AG04450 (cell line): ENCODE measurements at regions of chr6 and their contacts with region 1.

Region 1: GRCh38 chr6:27825025-27825793 is 87.0 kb downstream of the OR2B2 start:
- DNase-seq: no peak
- H3K4me3 ChIP-seq: peak overlapping the region; percentile 80
- H3K27ac ChIP-seq: peak overlapping the region; percentile 82
- H3K27me3 ChIP-seq: no peaks in the 10 kb centered on the region
- CTCF ChIP-seq: no peak

Region 2: DNA sequence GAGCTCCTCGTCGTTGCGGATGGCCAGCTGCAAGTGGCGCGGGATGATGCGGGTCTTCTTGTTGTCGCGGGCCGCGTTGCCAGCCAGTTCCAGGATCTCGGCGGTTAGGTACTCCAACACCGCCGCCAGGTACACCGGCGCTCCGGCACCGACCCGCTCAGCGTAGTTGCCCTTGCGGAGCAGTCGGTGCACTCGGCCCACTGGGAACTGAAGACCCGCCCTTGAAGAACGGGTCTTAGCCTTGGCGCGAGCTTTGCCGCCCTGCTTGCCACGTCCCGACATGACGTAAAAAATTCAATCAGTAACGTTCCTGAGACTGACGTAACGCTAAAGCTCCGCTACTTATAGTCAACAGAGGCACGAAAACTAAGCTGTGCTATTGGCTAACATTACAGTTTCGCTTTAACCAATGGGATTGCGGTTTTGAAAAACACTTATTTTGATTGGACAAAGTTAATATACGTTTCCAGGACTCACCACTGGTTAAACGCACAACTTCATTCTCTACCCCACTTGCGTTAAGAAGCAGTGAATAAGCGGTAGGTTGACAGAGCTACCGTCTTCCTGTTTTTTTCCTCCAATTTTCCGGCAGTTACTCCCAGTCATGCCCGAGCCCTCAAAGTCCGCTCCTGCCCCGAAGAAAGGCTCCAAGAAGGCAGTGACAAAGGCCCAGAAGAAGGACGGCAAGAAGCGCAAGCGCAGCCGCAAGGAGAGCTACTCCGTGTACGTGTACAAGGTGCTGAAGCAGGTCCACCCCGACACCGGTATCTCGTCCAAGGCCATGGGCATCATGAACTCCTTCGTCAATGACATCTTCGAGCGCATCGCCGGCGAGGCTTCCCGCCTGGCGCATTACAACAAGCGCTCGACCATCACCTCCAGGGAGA is 13.1 kb after region 1 on chr6:
- CTCF ChIA-PET with region 1: interaction called, 4 read pairs
- POLR2A ChIA-PET with region 1: interaction called, 37 read pairs
- DNase-seq: peak; percentile 99
- H3K4me3 ChIP-seq: peak overlapping the region; percentile 83
- H3K27ac ChIP-seq: peak overlapping the region; percentile 100
- H3K27me3 ChIP-seq: no peaks in the 10 kb centered on the region
- CTCF ChIP-seq: no peak

Region 3: GRCh38 chr6:27864906-27865849 is 40.0 kb after region 1 on chr6:
- CTCF ChIA-PET with region 1: no interaction called
- POLR2A ChIA-PET with region 1: interaction called, 74 read pairs
- DNase-seq: peak; percentile 94
- H3K4me3 ChIP-seq: peak overlapping the region; percentile 75
- H3K27ac ChIP-seq: peak overlapping the region; percentile 96
- H3K27me3 ChIP-seq: no peaks in the 10 kb centered on the region
- CTCF ChIP-seq: no peak

Region 4: GRCh38 chr6:27871924-27872638 is 46.9 kb after region 1 on chr6:
- CTCF ChIA-PET with region 1: no interaction called
- POLR2A ChIA-PET with region 1: interaction called, 74 read pairs
- DNase-seq: peak; percentile 96
- H3K4me3 ChIP-seq: peak overlapping the region; percentile 69
- H3K27ac ChIP-seq: peak overlapping the region; percentile 94
- H3K27me3 ChIP-seq: no peaks in the 10 kb centered on the region
- CTCF ChIP-seq: peak; percentile 40; the same call in 1 of the 2 replicates

Region 5: GRCh38 chr6:28683944-28684538 is 858.8 kb after region 1 on chr6:
- CTCF ChIA-PET with region 1: interaction called, 10 read pairs
- POLR2A ChIA-PET with region 1: no interaction called
- DNase-seq: no peak
- H3K4me3 ChIP-seq: no peak overlapping the region
- H3K27ac ChIP-seq: no peak overlapping the region
- H3K27me3 ChIP-seq: no peaks in the 10 kb centered on the region
- CTCF ChIP-seq: peak; percentile 57